GM10248 (cell line): ENCODE measurements at regions of chr13 and their contacts with region 1.

Region 1: DNA sequence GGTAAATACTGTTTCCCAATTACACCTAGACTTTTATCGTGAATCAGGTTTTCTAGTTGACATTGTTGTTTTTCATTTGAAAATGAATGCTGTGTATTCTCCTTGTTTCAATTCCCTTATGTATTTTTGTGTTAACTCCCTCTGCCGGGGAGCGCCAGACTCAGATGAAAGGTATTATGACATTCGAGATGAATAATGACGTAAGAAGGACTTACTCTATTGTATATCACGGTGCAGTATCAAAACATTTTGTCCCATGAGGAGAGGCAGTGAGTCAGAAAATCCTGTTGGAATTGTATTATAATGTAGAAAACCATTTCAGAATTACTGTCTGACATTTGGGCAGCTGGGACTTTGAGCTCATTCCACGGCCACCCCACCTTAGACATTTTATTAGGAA is 61.6 kb downstream of the LRCH1 start:
- DNase-seq: no peak
- CTCF ChIP-seq: no peak

Region 2: DNA sequence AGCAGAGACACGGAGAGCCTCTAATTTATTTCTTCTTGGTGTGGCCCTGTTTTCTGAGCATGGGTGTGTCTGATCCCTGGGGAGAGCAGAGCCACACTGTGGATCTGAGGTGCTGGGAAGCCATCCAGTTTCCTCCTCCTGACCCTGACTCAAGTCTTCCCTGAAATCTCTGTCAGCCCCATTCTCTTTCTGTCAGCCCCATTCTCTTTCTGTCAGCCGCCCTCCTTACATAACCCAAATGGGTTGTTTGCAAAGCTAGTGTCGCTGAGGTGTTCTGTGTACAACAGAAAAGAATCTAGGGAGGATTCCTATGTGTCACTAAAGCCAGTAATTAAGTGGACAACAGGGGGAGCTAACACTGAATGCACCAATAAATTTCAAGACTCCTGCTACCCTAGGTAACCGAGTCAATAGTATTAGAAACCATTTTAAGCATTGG is 11.4 kb before region 1 on chr13:
- CTCF ChIA-PET with region 1: interaction called, 11 read pairs
- POLR2A ChIA-PET with region 1: no interaction called
- DNase-seq: no peak
- CTCF ChIP-seq: peak; percentile 31

Region 3: GRCh38 chr13:48078251-48078656 is 1463.7 kb after region 1 on chr13:
- CTCF ChIA-PET with region 1: no interaction called
- POLR2A ChIA-PET with region 1: no interaction called
- DNase-seq: peak; percentile 48
- CTCF ChIP-seq: peak; percentile 20